ENCODE measurements at regions of chr5 and their contacts with region 1.

Region 1: DNA sequence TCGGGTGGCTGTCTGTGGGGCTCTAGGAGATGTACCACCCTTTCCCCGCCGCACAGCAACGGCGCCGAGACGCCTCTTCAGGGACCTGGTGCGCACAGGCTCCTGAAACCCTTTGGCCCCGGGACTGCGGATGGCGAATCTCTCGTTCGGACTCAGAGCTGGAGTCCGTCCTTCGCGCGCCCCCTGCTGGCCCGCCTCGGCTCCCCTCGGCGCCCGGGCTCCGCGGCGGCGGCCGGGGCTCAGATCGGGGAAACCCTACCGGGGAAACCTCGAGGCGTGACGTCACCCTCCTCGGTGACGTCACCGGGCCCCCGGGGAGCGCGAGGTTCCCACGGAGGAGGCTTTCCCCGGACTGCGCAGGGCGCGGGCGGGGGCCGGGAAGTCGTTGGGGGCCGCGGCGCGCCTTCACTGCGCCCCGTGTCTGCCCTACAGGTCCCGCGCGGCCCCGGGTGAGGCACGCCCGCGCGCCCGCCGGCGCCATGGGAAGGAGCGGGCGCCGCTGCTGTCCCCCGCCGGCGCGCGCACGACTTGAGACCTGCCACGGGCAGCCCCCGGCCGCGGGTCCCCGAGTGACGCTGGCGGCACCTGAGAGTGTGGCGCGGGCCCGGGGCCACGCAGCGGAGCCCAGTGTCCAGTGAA is 7.9 kb downstream of the PRR7 start:
- DNase-seq: peak; percentile 85
- H3K4me3 ChIP-seq: peak overlapping the region; percentile 28 to 60 (median 57)
- H3K27ac ChIP-seq: peak overlapping the region; percentile 23
- H3K4me1 ChIP-seq: peaks cover 46% of the 10 kb centered on the region
- H3K27me3 ChIP-seq: no peaks in the 10 kb centered on the region
- CTCF ChIP-seq: peak; percentile 70 to 83

Region 2: DNA sequence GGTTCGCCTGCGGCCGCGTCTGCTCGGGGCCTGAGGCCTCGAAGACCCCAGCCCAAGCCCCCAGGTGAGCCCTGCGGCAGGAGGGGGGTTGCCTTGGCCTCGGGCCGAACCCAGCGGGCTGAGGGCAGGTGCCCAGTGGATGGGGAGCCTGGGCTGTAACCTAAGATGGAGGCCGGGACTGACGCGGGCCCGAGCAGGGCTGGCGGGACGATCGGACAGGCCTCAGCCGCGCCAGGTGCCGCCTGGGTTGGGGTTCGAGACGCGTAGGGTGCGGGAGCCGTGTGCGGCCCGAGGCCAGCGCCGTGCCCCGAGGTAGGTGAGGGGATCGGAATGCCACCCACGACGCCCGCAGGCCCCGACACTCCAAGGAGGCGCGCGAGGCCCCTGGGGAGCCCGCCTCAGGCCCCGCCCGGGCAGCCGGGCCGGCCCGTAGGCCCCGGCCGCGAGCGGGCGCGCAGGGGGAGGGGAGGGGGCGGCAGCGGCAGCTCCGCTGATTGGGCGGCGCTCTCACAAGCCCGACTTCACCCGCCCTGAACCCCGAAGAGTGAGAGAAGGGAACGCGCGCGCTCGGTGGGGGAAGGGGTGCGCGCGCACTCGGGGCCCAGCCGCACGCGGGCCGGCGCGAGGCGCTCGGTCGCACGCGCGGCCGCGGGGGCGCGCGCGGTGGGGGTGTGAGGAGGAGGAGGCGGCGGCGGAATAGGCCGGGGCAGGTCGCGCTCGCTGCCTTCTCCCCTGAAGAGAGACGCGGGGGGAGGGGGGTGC is 321.2 kb before region 1 on chr5 and contains the start of gene NSD1:
- CTCF ChIA-PET with region 1: interaction called, 9 read pairs
- dilution Hi-C with region 1: no loop called
- in situ Hi-C with region 1: no loop called
- intact Hi-C with region 1: loop called (anchors 5 kb)
- DNase-seq: peak; percentile 57
- H3K4me3 ChIP-seq: peak within 1 kb of the TSS; percentile 67 to 69 (median 69)
- H3K27ac ChIP-seq: peak within 1 kb of the TSS; percentile 63
- H3K4me1 ChIP-seq: peaks cover 34% of the 10 kb centered on the region
- H3K27me3 ChIP-seq: no peaks in the 10 kb centered on the region
- CTCF ChIP-seq: no peak
- total RNA-seq, gene NSD1: 53.0 to 55.7 TPM

Region 3: DNA sequence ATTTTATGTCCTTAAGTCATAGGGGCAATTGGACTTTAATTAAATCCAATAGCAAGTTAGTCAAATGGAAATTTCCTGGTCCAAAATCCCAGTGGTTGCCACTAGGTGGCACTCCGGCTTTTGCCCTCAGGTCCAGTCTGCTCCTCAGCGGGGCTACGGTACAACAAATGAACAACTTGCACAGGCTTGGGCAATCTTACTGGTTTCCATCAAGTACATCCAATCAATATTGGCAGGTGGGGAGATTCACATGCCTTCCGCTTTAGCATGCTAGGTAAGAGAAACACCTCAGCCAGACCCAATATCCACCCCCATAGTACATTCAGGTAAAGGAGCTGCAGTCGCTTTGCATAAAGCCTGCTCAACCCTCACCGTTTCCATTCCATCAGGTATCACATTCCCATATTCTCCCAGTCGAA is 136.5 kb before region 1 on chr5:
- CTCF ChIA-PET with region 1: no interaction called
- dilution Hi-C with region 1: loop called (anchors 5 kb)
- in situ Hi-C with region 1: loop called in 1 of 2 experiments (anchors 10 kb)
- intact Hi-C with region 1: loop called (anchors 1 kb)
- DNase-seq: peak; percentile 61
- H3K4me3 ChIP-seq: no peak overlapping the region
- H3K27ac ChIP-seq: no peak overlapping the region
- H3K4me1 ChIP-seq: peaks cover 2% of the 10 kb centered on the region
- H3K27me3 ChIP-seq: no peaks in the 10 kb centered on the region
- CTCF ChIP-seq: peak; percentile 88

Region 4: GRCh38 chr5:177351385-177352329 is 102.9 kb before region 1 on chr5 and contains the start of gene LMAN2:
- CTCF ChIA-PET with region 1: no interaction called
- dilution Hi-C with region 1: no loop called
- in situ Hi-C with region 1: no loop called
- intact Hi-C with region 1: loop called (anchors 1 kb)
- DNase-seq: peak; percentile 97
- H3K4me3 ChIP-seq: peak within 1 kb of the TSS; percentile 58 to 86 (median 74)
- H3K27ac ChIP-seq: peak within 1 kb of the TSS; percentile 88
- H3K4me1 ChIP-seq: peaks cover 19% of the 10 kb centered on the region
- H3K27me3 ChIP-seq: no peaks in the 10 kb centered on the region
- CTCF ChIP-seq: no peak
- total RNA-seq, gene LMAN2: 114 to 201 TPM

Region 5: DNA sequence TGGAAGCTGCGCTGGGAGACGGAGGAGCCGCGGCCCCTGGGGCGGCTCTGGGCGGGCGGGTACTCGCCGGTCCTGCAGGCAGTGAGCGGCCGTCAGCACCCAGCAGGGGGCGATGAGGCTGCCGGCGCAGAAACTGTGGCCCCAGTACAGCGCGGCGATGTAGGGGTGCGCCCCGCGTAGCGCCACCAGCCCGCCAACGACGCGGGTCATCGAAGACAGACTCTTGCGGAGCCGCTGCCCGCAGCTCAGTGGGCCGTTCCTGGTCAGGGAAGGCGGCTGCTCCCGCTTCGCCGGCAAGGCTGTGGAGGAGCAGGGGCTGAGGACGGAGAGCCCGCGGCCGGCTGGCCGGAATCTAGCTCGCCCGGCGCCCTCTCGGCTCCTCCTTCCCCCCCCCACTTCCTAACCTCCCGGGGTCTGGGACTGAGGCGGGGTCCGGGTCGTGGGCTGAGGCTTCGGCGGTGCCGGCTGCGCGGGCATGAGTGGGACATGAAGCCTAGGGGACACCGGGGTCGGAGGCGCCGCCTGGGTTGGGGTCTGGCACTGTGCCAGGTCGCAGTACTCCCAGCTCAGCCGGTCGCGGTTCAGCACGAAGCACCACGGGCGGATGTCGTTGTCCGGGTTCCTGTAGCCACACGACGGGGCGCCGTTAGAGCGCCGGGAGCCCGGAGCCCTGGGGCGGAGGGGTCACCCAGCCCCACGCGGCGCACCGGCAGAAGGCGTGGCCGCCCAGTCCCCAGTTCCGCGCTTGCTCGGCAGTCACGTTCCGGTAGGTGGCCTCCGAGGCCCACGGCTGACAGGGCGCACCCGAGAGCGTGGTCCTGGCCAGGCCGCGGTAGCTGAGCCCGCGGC is 50.5 kb before region 1 on chr5:
- CTCF ChIA-PET with region 1: interaction called, 8 read pairs
- dilution Hi-C with region 1: loop called (anchors 5 kb)
- in situ Hi-C with region 1: loop called in 1 of 2 experiments (anchors 5 kb)
- intact Hi-C with region 1: loop called (anchors 1 kb)
- DNase-seq: peak; percentile 65
- H3K4me3 ChIP-seq: peak overlapping the region; percentile 55 to 74 (median 65)
- H3K27ac ChIP-seq: no peak overlapping the region
- H3K4me1 ChIP-seq: peaks cover 28% of the 10 kb centered on the region
- H3K27me3 ChIP-seq: no peaks in the 10 kb centered on the region
- CTCF ChIP-seq: peak; percentile 35 to 82

Region 6: GRCh38 chr5:177468696-177469628 is 14.4 kb after region 1 on chr5:
- CTCF ChIA-PET with region 1: no interaction called
- dilution Hi-C with region 1: no loop called
- in situ Hi-C with region 1: no loop called
- intact Hi-C with region 1: loop called (anchors 1 kb)
- DNase-seq: no peak
- H3K4me3 ChIP-seq: no peak overlapping the region
- H3K27ac ChIP-seq: no peak overlapping the region
- H3K4me1 ChIP-seq: peaks cover 38% of the 10 kb centered on the region
- H3K27me3 ChIP-seq: no peaks in the 10 kb centered on the region
- CTCF ChIP-seq: no peak

Region 7: GRCh38 chr5:177546258-177546741 is 91.8 kb after region 1 on chr5:
- CTCF ChIA-PET with region 1: no interaction called
- dilution Hi-C with region 1: no loop called
- in situ Hi-C with region 1: no loop called
- intact Hi-C with region 1: no loop called
- DNase-seq: peak; percentile 99
- H3K4me3 ChIP-seq: no peak overlapping the region
- H3K27ac ChIP-seq: peak overlapping the region; percentile 85
- H3K4me1 ChIP-seq: peaks cover 28% of the 10 kb centered on the region
- H3K27me3 ChIP-seq: no peaks in the 10 kb centered on the region
- CTCF ChIP-seq: peak in 1 of 2 donors; percentile 8

Measured in mammary epithelial cell (primary cell).